ENCODE measurements at regions of chr7 and their contacts with region 1.

Region 1: GRCh38 chr7:88546808-88547207 is 212.7 kb upstream of the ZNF804B start:
- DNase-seq: peak; percentile 68
- H3K4me3 ChIP-seq: no peak overlapping the region
- H3K27ac ChIP-seq: no peak overlapping the region
- H3K4me1 ChIP-seq: no peaks in the 10 kb centered on the region
- H3K27me3 ChIP-seq: no peaks in the 10 kb centered on the region
- CTCF ChIP-seq: peak; percentile 62 to 64
- POLR2A ChIP-seq: no peak

Region 2: DNA sequence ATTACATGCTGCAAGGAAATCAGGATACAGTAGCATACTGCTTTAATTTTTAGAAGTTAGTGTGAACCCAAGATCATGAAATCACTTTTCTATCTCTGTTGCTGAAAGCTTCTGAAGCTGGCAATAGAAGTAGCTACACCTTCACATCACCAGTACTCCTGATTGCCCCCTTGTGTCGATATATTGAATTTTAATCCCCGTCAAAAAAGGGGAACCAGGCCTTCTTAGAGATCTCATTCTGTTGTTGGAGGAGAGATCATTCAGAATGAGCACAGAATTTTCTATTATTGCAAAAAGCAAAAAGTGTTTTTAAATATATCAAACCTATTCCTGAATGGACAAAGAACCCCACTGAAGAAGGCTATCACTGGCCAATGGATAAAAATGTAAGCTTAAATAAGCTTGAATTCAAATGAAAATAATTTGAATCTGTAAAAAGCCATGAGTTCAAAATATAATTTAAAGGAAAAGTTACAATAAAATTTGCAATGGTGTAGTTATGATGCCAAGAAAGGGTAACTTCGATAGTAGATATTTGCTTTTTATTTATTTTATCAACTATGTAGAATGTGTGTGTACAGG is 288.4 kb after region 1 on chr7:
- CTCF ChIA-PET with region 1: interaction called, 116 read pairs
- POLR2A ChIA-PET with region 1: no interaction called
- dilution Hi-C with region 1: no loop called
- intact Hi-C with region 1: loop called (anchors 1 kb)
- DNase-seq: peak; percentile 58
- H3K4me3 ChIP-seq: no peak overlapping the region
- H3K27ac ChIP-seq: no peak overlapping the region
- H3K4me1 ChIP-seq: no peaks in the 10 kb centered on the region
- H3K27me3 ChIP-seq: no peaks in the 10 kb centered on the region
- CTCF ChIP-seq: peak; percentile 23 to 40
- POLR2A ChIP-seq: no peak

Region 3: DNA sequence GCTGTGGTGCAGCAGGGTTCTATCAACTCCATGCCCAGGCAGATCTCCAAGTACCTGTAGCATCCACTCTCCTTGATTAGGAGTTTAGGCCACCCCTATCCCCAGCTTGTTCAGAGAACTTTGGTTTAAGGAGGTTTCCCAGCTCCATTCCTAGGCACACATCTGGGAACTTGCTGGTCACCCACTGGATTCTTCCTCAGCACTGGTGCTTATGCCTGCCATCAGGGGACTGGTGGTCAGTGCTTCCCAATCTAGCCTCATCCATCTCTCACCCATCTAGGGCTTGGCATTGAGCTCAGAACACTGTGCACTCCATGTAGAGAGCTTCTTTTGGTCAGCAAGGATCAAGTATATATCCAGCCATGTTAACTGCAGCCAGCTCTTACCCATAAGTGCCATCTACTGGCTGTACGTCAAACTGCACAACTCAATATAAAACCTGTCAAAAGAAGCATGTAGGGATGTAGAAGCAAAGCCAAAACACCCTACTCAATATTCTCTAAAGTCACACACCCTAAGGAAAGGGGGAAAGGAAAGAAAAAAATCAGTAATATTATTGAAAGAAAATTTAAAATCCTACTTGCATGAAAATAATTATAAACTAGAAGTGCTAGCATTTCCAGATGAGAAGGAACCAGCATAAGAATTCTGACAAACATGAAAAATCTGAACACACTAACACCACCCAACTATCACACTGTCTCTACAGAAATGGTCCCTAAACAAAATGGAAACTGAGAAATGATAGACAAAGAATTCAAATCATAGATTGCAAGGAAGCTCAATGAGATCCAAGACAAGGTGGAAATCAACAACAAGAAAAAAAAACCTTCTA is 1076.2 kb after region 1 on chr7:
- CTCF ChIA-PET with region 1: interaction called, 26 read pairs
- POLR2A ChIA-PET with region 1: no interaction called
- dilution Hi-C with region 1: no loop called
- intact Hi-C with region 1: no loop called
- DNase-seq: peak; percentile 25
- H3K4me3 ChIP-seq: no peak overlapping the region
- H3K27ac ChIP-seq: no peak overlapping the region
- H3K4me1 ChIP-seq: no peaks in the 10 kb centered on the region
- H3K27me3 ChIP-seq: no peaks in the 10 kb centered on the region
- CTCF ChIP-seq: peak; percentile 33 to 52
- POLR2A ChIP-seq: no peak

Measured in endothelial cell of umbilical vein (primary cell).